Heart right ventricle (tissue), 16 donors: ENCODE measurements at regions of chr16 and their contacts with region 1.

Region 1: DNA sequence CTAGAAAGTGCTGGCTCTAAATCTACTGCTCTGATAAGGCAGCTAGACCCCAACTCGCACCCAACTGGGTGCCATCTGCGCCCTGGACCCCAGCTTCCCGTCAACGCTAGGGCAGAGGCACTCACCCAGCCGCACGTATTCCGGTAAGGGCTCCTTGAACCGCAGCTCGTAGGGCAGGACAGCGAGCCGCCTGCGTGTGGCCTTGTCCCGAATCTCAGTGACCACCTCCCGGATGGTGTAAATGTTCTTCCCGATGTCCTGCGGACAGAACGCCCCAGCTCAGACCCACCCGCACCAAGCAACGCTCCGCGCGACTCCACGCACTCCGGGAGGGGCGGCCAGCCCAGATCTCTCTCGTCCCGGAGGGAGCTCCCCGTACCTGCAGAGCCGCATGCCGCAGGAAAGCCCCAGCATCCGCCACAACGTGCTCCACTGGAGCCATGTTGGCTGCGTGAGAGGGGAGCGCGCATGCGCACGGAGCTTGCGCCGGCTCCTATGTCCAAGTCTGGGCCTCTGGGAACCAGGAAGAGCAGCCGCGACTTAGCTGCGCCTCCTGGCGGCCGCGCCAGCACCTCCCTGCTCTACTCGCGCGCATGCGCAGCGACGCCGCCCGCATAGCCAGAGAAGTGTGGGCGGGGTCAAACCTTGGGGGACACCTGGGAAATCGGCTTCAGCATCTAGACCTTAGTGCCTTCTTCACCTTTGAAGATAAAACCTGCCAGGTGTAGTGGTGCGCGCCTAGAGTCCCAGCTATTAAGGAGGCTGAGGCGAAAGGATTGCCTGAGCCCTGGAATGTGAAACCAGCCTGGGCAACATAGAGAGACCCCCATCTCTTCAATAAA is at the start of gene NOB1:
- DNase-seq: peak; percentile 93 to 98
- ATAC-seq: peak; percentile 98 to 99 (median 99)
- H3K4me3 ChIP-seq: peak within 1 kb of the TSS; percentile 63 to 93 (median 82)
- H3K27ac ChIP-seq: peak within 1 kb of the TSS in 9 of 10 donors; percentile 49 to 86 (median 75)
- H3K4me1 ChIP-seq: peaks cover 0 to 26% (median 18%) of the 10 kb centered on the region in 9 donors
- H3K27me3 ChIP-seq: no peaks in the 10 kb centered on the region
- CTCF ChIP-seq: peak; percentile 97 to 100 (median 98)
- total RNA-seq, gene NOB1: 11.2 to 23.4 (median 15.6) TPM

Region 2: DNA sequence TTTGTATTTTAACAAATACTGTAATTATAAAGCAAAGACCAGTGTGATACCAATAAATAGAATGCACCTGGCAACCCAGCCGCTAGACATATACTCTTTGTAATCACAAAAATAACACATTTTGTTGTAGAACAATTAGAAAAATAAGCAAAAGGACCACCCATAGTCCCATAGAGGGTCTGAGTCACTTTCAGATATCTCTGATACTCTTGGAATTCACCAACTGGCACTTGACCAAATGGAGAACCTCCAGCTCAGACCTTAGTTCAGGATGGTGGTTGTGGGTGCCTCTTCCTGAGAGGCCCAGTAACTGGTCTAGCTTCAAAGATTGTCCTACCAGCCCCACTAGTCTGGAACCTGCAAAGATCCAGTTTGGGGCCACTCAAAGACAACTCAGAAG is 368.1 kb before region 1 on chr16:
- intact Hi-C with region 1: loop called in 2 of 10 experiments (anchors 5 to 10 kb)
- DNase-seq: no peak
- ATAC-seq: no peak
- H3K4me3 ChIP-seq: peak overlapping the region in 6 of 10 donors; percentile 73 to 84 (median 80)
- H3K27ac ChIP-seq: peak overlapping the region in 3 of 10 donors; percentile 90 to 95 (median 90)
- H3K4me1 ChIP-seq: peaks cover 0 to 37% (median 22%) of the 10 kb centered on the region in 9 donors
- H3K27me3 ChIP-seq: no peaks in the 10 kb centered on the region
- CTCF ChIP-seq: no peak

Region 3: GRCh38 chr16:69513188-69513961 is 241.3 kb before region 1 on chr16:
- intact Hi-C with region 1: no loop called
- DNase-seq: no peak
- ATAC-seq: no peak
- H3K4me3 ChIP-seq: no peak overlapping the region
- H3K27ac ChIP-seq: no peak overlapping the region
- H3K4me1 ChIP-seq: peaks cover 0 to 24% (median 0%) of the 10 kb centered on the region in 9 donors
- H3K27me3 ChIP-seq: peaks cover 0 to 11% (median 0%) of the 10 kb centered on the region in 7 donors
- CTCF ChIP-seq: no peak

Region 4: GRCh38 chr16:69709456-69710084 is 45.1 kb before region 1 on chr16:
- intact Hi-C with region 1: loop called (anchors 1 to 5 kb)
- DNase-seq: no peak
- ATAC-seq: peak in 6 of 8 donors; percentile 34 to 73 (median 56)
- H3K4me3 ChIP-seq: no peak overlapping the region
- H3K27ac ChIP-seq: peak overlapping the region in 4 of 10 donors; percentile 3 to 59 (median 34)
- H3K4me1 ChIP-seq: peaks cover 0 to 10% (median 5%) of the 10 kb centered on the region in 9 donors
- H3K27me3 ChIP-seq: no peaks in the 10 kb centered on the region
- CTCF ChIP-seq: peak; percentile 35 to 80 (median 71)

Region 5: GRCh38 chr16:69726296-69727060 is 28.2 kb before region 1 on chr16 and contains the start of gene NQO1:
- intact Hi-C with region 1: loop called in 1 of 10 experiments (anchors 2 kb)
- DNase-seq: peak; percentile 91
- ATAC-seq: peak; percentile 96 to 98 (median 97)
- H3K4me3 ChIP-seq: peak within 1 kb of the TSS; percentile 32 to 67 (median 56)
- H3K27ac ChIP-seq: peak within 1 kb of the TSS; percentile 20 to 87 (median 81)
- H3K4me1 ChIP-seq: peaks cover 5 to 42% (median 27%) of the 10 kb centered on the region in 9 donors
- H3K27me3 ChIP-seq: no peaks in the 10 kb centered on the region
- CTCF ChIP-seq: no peak
- total RNA-seq, gene NQO1: 5.9 to 37.3 (median 12.2) TPM

Region 6: GRCh38 chr16:69741919-69742904 is 12.5 kb before region 1 on chr16:
- intact Hi-C with region 1: loop called in 1 of 10 experiments (anchors 1 kb)
- DNase-seq: peak; percentile 80 to 82
- ATAC-seq: peak in 7 of 8 donors; percentile 53 to 70 (median 65)
- H3K4me3 ChIP-seq: no peak overlapping the region
- H3K27ac ChIP-seq: peak overlapping the region in 6 of 10 donors; percentile 2 to 66 (median 42)
- H3K4me1 ChIP-seq: peaks cover 0 to 28% (median 13%) of the 10 kb centered on the region in 9 donors
- H3K27me3 ChIP-seq: no peaks in the 10 kb centered on the region
- CTCF ChIP-seq: no peak